Head of caudate nucleus (tissue), 42 donors: ENCODE measurements at regions of chr4 and their contacts with region 1.

Region 1: DNA sequence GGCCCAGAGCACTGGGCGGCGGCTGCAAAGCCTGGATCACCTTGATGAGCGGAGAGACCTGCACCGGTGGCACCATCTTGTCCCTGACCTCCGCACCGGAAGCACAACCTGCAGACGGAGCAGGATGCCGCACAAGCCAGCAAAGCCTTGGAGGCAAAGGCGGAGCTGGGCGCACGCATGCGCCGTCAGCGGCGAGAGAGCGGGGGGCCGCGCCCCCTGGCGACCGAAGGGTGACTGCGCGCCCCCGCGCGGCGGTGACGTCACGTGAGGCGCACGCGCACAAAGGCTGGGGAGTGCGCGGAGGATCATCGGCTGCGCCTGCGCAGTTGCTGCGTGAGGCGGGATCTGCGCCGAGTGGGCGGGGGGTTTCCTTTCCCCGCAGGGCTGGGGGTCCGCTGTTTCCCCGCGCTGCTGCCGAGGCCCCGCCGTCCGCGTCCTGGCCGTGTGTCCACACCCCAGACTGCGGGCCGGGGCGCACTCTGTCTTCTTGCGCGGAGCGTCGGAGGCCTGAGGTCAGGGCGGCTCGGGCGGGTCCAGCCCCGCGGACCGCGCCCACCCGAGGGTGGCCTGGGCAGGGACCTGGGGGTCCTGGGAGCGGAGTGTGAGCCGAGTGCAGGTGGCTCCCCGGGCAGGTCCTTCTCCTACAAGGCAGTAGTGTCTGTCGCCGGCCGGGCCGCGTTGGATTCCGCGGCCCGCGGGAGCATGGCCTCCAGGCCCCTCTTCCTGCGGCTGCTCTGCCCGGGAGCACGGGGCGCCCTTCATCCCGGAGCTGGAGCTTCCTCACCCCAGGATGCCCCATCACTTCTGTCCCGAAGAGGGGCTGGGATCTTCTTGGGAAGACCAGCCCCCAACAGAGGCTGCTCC is at the starts of genes ATP5ME and MYL5:
- DNase-seq: peak; percentile 92 to 99 (median 97)

Region 2: DNA sequence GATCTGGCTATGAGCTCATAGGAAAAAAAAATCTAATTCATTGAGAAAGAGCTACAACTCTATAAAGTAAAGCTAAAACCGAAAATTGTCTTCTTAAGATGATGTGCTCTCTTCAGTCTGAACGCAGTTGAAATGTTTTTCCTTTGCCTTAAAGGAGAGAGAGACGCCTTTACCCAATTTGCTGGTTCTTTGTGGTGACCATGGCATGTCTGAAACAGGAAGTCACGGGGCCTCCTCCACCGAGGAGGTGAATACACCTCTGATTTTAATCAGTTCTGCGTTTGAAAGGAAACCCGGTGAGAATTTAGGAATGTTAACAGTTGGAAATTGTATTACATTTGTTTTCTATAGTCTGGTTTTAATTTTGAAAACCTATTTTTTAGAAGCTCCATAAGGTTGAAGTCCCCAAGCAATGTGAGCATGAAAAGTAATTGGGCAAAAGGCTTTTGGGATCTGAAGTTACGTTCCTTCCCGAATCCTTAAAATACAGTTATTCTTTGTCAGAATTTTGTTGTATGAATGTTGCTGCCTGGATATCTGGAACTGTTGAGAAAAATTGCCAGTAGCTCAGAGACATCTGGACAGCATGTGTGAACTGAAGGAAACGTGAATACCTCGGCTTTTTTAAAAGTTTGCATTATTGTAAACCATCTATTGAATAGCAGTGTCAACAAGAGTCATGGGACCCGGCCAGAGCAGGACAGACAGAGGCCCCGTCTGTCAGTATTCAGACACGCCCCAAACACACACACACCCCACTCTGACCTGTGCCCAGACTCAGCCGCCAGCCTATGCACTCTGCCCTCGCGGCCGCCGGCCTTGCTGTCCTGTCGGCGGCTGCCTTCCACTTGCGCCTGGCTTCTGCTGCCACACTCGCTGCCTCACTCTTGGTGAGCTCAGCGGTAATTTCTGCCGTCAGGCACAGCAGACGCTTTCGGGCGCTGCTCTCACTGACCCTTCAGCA is 165.4 kb before region 1 on chr4:
- intact Hi-C with region 1: loop called (anchors 10 kb)
- DNase-seq: no peak

Region 3: DNA sequence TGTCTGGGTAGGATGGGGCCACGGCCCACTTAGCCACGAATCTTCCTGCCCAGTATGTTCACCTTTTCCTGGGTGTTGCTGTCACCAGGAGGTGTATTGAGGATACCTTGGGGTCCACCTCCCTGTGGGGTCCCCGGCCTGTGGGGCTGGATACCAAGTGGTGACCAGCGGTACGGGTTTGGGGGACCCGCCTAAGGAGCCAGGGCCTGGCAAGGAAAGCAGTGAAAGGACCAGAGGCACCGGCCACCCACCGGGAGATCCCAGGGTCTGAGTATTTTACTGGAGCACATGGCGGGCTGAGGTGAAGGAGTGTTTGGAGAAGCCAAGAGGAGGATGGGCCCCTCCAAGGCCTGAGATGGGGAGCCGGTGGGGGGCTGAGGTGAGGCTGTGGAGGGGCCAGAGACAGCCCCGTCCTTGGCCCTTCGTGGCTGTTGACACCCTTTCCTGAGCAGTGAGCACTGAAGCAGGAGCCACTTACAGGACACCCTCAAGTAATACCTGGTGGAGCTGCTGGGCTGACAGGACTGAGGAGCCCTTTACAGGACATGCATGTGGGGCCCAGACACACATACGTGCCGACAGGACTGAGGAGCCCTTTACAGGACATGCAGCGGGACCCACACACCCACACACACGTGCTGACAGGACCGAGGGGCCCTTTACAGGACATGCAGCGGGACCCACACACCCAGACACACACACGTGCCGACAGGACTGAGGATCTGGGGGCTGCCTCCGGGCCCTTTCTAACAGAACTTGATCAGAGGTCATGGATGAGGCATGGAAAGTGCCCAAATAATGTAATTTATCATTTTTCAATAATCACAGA is 136.8 kb before region 1 on chr4:
- intact Hi-C with region 1: no loop called
- DNase-seq: peak in 3 of 42 donors; percentile 10 to 20 (median 16)